ENCODE measurements at regions of chr14 and their contacts with region 1.

Region 1: DNA sequence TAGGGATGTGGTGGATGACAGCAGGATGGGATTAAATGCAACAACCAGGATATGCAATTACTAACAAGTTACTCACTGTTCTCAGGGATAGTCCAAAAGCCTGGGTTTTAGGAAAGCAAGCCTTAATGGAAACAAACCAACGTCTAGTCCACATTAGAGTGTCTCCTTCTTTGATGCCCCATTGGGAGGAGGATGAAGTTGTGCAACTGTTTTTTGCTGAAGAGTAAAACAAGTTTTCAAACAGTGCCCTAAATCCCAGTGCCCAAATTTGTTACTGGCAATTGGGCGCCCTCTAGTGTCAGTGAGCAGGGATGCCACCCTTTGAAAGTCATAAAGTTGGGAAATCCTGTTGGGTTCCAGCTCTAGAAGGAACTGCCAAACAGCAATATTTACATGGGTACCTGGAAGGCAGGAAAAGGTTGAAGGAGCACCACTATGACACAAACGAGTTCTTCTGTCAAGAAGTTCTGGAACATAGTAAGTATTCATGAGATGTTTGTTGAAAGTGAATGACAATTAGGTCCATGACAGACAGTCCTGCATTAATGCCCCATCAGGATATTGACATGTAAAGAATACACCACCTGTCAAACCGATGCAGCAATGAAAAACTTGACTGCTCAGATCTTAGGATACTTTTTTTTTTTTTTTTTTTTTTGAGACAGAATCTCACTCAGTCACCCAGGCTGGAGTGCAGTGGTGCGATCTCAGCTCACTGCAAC is 11.1 kb upstream of the DPF3 start:
- DNase-seq: peak; percentile 73
- ATAC-seq: peak; percentile 71
- H3K4me3 Mint-ChIP-seq: no peak overlapping the region
- H3K27ac Mint-ChIP-seq: no peak overlapping the region
- H3K4me1 Mint-ChIP-seq: no peaks in the 10 kb centered on the region
- H3K27me3 Mint-ChIP-seq: peaks cover 2% of the 10 kb centered on the region

Region 2: DNA sequence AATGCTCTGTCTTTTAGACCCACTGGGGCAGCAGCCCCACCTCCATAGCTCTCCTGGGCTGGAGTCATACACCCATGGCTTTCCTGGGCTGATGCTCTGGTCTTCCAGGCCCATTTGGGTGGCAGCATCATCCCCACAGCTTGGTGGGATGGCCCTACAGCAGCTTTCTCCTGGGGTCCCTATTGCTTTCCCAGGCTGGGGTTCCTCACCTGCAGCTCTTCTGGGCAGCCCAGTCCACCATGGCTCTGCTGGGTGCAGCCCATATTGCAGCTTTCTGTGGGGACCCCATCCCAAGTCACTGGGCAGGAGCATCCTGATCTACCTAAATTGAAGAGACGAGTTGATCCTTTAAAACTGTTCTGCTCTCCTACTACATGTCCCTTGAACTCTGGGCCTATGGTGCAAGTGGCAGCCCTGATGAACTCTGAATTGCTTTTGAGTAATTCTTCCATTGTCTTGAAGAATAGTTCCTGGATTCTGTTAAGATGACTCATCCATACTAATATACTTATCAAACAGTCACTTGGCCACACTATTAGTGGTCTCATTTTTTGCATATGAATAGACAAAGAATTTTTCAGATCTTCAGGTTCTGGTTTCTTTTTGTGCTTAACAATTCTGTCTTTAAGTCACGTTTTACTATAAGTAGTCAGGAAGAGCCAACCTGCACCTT is 401.2 kb before region 1 on chr14:
- CTCF ChIA-PET with region 1: interaction called, 10 read pairs
- POLR2A ChIA-PET with region 1: no interaction called
- intact Hi-C with region 1: no loop called
- DNase-seq: no peak
- ATAC-seq: no peak
- H3K4me3 Mint-ChIP-seq: no peak overlapping the region
- H3K27ac Mint-ChIP-seq: no peak overlapping the region
- H3K4me1 Mint-ChIP-seq: no peaks in the 10 kb centered on the region
- H3K27me3 Mint-ChIP-seq: no peaks in the 10 kb centered on the region

Region 3: GRCh38 chr14:72665259-72665658 is 239.7 kb before region 1 on chr14:
- CTCF ChIA-PET with region 1: interaction called, 6 read pairs
- POLR2A ChIA-PET with region 1: no interaction called
- intact Hi-C with region 1: loop called in 1 of 2 experiments (anchors 5 kb)
- DNase-seq: no peak
- ATAC-seq: peak; percentile 88
- H3K4me3 Mint-ChIP-seq: no peak overlapping the region
- H3K27ac Mint-ChIP-seq: no peak overlapping the region
- H3K4me1 Mint-ChIP-seq: peaks cover 11% of the 10 kb centered on the region
- H3K27me3 Mint-ChIP-seq: peaks cover 4% of the 10 kb centered on the region

Region 4: GRCh38 chr14:72893636-72894321 is 11.2 kb before region 1 on chr14 and contains the start of gene DPF3:
- CTCF ChIA-PET with region 1: interaction called, 14 read pairs
- POLR2A ChIA-PET with region 1: interaction called, 3 read pairs
- intact Hi-C with region 1: no loop called
- DNase-seq: peak; percentile 94
- ATAC-seq: peak; percentile 99
- H3K4me3 Mint-ChIP-seq: peak within 1 kb of the TSS; percentile 78
- H3K27ac Mint-ChIP-seq: peak within 1 kb of the TSS; percentile 55
- H3K4me1 Mint-ChIP-seq: peaks cover 17% of the 10 kb centered on the region
- H3K27me3 Mint-ChIP-seq: peaks cover 43% of the 10 kb centered on the region
- total RNA-seq, gene DPF3: 0.25 to 0.39 TPM

Region 5: DNA sequence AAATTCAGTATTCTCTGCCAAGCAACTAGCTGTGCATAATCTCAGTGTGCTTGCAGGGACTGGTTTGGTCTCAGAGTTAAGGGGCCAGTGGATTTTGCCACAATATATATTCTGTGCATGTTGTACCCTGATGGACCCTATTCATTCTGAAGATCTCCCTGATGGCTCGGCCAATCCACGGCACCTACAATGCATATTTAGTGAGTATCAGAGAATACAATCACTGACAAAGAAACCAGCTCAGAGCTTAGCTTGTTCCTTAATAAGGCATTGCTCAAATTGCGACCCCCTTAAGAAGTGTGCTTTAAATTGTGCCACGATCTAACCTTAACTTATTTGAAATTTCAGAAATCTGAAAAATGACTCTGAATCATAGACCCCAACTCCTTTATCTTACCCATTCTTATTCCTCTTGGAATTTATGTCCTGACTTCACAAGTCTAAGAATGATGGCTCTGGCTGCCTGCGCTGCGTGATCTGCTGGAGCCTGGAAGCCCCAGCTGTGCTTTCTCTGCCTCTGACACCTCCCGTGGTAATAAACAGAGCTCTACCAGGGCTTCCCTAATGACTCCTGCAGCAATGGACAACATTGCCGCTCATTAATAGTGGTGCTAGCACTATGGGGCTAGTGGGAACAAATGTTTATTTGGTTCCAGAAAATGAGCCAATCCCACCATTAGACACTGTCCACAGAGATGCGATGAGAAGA is 12.2 kb after region 1 on chr14:
- CTCF ChIA-PET with region 1: interaction called, 11 read pairs
- POLR2A ChIA-PET with region 1: interaction called, 5 read pairs
- intact Hi-C with region 1: no loop called
- DNase-seq: no peak
- ATAC-seq: no peak
- H3K4me3 Mint-ChIP-seq: no peak overlapping the region
- H3K27ac Mint-ChIP-seq: no peak overlapping the region
- H3K4me1 Mint-ChIP-seq: no peaks in the 10 kb centered on the region
- H3K27me3 Mint-ChIP-seq: peaks cover 6% of the 10 kb centered on the region

Measured in activated CD4-positive, alpha-beta T cell treated with anti-CD3 and anti-CD28 coated beads for 36 hours (primary cell).